GM12878 (cell line): ENCODE measurements at regions of chr3 and their contacts with region 1.

Region 1: GRCh38 chr3:69120879-69121464 is 1.4 kb downstream of the LMOD3 start:
- DNase-seq: peak; percentile 48
- ATAC-seq: peak; percentile 96
- H3K4me3 ChIP-seq: no peak overlapping the region
- H3K27ac ChIP-seq: no peak overlapping the region
- H3K4me1 ChIP-seq: no peaks in the 10 kb centered on the region
- H3K27me3 ChIP-seq: 0 out of 4 replicates have a peak, but pooled peaks cover 0 to 3% of the 10 kb centered on the region in 2 experiments
- CTCF ChIP-seq: peak; percentile 91 to 98 (median 95); a peak in 5 of 6 replicates
- EP300 ChIP-seq: no peak
- POLR2A ChIP-seq: no peak
- RAD21 ChIP-seq: peak; percentile 85

Region 2: GRCh38 chr3:69092030-69092516 is 28.9 kb before region 1 on chr3:
- CTCF ChIA-PET with region 1: interaction called, 10 read pairs
- POLR2A ChIA-PET with region 1: interaction called, 6 read pairs
- RAD21 ChIA-PET with region 1: interaction called, 3 read pairs
- SMC1A ChIA-PET with region 1: interaction called, 11 read pairs
- in situ Hi-C with region 1: no loop called
- intact Hi-C with region 1: no loop called
- DNase-seq: no peak
- ATAC-seq: peak; percentile 70
- H3K4me3 ChIP-seq: peak overlapping the region; percentile 59
- H3K27ac ChIP-seq: peak overlapping the region; percentile 39
- H3K4me1 ChIP-seq: peaks cover 54% of the 10 kb centered on the region
- H3K27me3 ChIP-seq: no peaks in the 10 kb centered on the region
- CTCF ChIP-seq: no peak
- EP300 ChIP-seq: no peak
- POLR2A ChIP-seq: no peak
- RAD21 ChIP-seq: no peak

Region 3: GRCh38 chr3:69104996-69105719 is 15.8 kb before region 1 on chr3:
- CTCF ChIA-PET with region 1: interaction called, 28 read pairs
- POLR2A ChIA-PET with region 1: interaction called, 3 read pairs
- RAD21 ChIA-PET with region 1: interaction called, 20 read pairs
- SMC1A ChIA-PET with region 1: interaction called, 7 read pairs
- in situ Hi-C with region 1: no loop called
- intact Hi-C with region 1: no loop called
- DNase-seq: no peak
- ATAC-seq: no peak
- H3K4me3 ChIP-seq: no peak overlapping the region
- H3K27ac ChIP-seq: no peak overlapping the region
- H3K4me1 ChIP-seq: no peaks in the 10 kb centered on the region
- H3K27me3 ChIP-seq: no peaks in the 10 kb centered on the region
- CTCF ChIP-seq: no peak
- EP300 ChIP-seq: no peak
- POLR2A ChIP-seq: no peak
- RAD21 ChIP-seq: no peak

Region 4: DNA sequence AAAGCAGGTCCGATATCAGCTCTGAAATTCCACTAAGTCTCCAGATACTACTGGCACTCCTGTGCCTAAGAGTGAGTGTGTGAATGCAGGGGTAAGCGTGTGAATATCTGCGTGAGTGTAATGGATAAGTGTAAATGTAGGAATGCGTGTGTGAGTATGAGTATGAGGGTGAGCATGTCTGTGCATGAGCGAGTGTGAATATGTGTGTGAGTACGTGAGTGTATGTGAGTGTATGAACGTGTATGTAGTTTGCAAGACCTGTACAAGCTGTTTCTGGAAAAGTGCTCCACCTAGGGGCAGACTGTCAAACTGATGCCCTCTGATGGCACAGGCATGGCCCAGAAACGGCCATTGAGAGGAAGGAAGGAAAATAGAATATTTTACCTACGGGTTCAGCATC is 289.3 kb after region 1 on chr3:
- CTCF ChIA-PET with region 1: interaction called, 13 read pairs
- POLR2A ChIA-PET with region 1: no interaction called
- RAD21 ChIA-PET with region 1: interaction called, 7 read pairs
- SMC1A ChIA-PET with region 1: interaction called, 18 read pairs
- in situ Hi-C with region 1: no loop called
- intact Hi-C with region 1: no loop called
- DNase-seq: peak; percentile 61
- ATAC-seq: peak; percentile 100
- H3K4me3 ChIP-seq: no peak overlapping the region
- H3K27ac ChIP-seq: no peak overlapping the region
- H3K4me1 ChIP-seq: no peaks in the 10 kb centered on the region
- H3K27me3 ChIP-seq: no peaks in the 10 kb centered on the region
- CTCF ChIP-seq: peak; percentile 85 to 92 (median 86)
- EP300 ChIP-seq: no peak
- POLR2A ChIP-seq: no peak
- RAD21 ChIP-seq: peak; percentile 76

Region 5: GRCh38 chr3:69439643-69440270 is 318.8 kb after region 1 on chr3:
- CTCF ChIA-PET with region 1: interaction called, 24 read pairs
- POLR2A ChIA-PET with region 1: no interaction called
- RAD21 ChIA-PET with region 1: interaction called, 11 read pairs
- SMC1A ChIA-PET with region 1: interaction called, 7 read pairs
- in situ Hi-C with region 1: no loop called
- intact Hi-C with region 1: no loop called
- DNase-seq: peak; percentile 16
- ATAC-seq: peak; percentile 31
- H3K4me3 ChIP-seq: no peak overlapping the region
- H3K27ac ChIP-seq: no peak overlapping the region
- H3K4me1 ChIP-seq: 0 out of 2 replicates have a peak, but pooled peaks cover 2% of the 10 kb centered on the region
- H3K27me3 ChIP-seq: no peaks in the 10 kb centered on the region
- CTCF ChIP-seq: peak; percentile 50 to 64 (median 54)
- EP300 ChIP-seq: no peak
- POLR2A ChIP-seq: no peak
- RAD21 ChIP-seq: peak; percentile 53

Region 6: DNA sequence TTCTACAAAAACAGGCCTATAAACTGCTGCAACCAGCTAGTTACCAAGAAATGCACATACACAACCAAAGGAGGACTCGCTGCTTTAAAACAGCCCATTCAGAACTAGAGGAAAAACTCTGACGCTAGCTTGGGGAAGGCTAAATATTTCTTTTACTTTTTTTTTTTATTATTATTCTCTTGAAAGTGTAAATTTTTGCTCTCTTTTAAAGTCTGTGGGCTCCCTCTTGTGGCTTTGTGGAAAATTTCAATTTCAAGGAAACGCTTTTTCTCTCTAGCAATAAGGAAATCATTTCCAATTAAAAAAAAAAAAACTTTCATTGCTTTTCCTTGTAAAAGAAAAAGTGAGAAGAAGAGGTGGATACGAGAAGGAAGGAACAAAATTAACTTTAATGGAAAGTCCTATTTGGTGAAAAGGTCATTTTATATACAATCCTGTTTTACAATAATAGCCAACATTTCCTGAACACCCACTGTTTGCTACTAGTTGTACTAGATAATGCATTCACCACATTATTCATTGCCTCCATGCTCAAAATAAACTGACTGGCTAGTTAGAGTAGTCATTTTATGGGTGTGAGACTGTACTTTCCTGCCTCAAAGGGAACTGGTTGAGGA is 827.4 kb after region 1 on chr3:
- CTCF ChIA-PET with region 1: no interaction called
- POLR2A ChIA-PET with region 1: no interaction called
- RAD21 ChIA-PET with region 1: interaction called, 4 read pairs
- SMC1A ChIA-PET with region 1: no interaction called
- in situ Hi-C with region 1: no loop called
- intact Hi-C with region 1: loop called (anchors 10 kb)
- DNase-seq: no peak
- ATAC-seq: no peak
- H3K4me3 ChIP-seq: no peak overlapping the region
- H3K27ac ChIP-seq: no peak overlapping the region
- H3K4me1 ChIP-seq: no peaks in the 10 kb centered on the region
- H3K27me3 ChIP-seq: no peaks in the 10 kb centered on the region; a peak in 1 of 4 replicates
- CTCF ChIP-seq: peak; percentile 33 to 41 (median 41); a peak in 5 of 6 replicates
- EP300 ChIP-seq: no peak
- POLR2A ChIP-seq: no peak
- RAD21 ChIP-seq: peak; percentile 55